Activated T-helper 1 cell treated with anti-CD3 and anti-CD28 coated beads, Interleukin-12 subunit alpha, Interleukin-12 subunit beta, Interleukin-2, Interleukin-4 antibody, amounts not matched to agents 30 ng/mL and 10 ng/mL and 1 ng/mL, durations not matched to agents 14 hours and 24 hours and 36 hours (primary cell): ENCODE measurements at regions of chr2 and their contacts with region 1.

Region 1: DNA sequence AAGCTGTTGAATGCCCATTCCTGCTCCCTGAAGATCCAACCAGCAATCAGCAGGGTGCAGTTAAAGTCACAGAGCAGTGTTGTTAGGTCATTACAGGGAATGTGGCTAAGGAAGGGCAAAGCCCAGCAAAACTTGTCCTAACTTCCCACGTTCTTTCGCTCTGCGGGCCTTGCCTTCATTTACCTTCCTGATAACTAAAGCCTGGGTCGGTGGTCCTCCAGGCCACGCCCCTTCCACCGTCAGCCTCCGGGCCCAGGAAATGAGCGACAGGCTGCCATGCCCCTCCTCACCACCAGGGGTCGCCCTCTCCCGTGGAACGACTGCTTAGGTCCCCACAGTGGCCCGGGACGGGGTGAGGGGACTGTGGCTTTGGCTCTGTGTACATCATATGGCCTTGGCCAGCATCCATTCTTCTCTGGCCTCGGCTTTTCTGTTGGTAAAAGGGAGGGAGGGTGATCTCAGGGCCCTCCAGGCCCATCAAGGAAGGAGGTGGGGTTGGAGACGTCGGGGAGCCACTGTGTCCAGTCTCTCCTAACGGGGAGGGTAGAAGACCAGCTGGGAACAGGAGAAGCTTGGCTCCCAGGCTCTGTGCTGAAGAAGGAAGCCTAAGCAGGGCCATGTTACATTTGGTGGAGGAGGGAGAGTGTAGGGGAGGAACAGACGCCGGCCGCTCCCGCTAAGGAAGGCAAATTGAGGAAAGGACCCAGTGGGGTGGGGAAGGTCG is 2.2 kb downstream of the SH2D6 start:
- DNase-seq: peak; percentile 86
- H3K4me3 Mint-ChIP-seq: peak overlapping the region; percentile 80
- H3K27ac Mint-ChIP-seq: peak overlapping the region; percentile 84
- H3K4me1 Mint-ChIP-seq: peaks cover 34% of the 10 kb centered on the region
- H3K27me3 Mint-ChIP-seq: no peaks in the 10 kb centered on the region

Region 2: GRCh38 chr2:85354286-85355072 is 66.2 kb before region 1 on chr2 and contains the starts of genes ELMOD3 and RETSAT:
- intact Hi-C with region 1: loop called (anchors 1 kb)
- DNase-seq: peak; percentile 97
- H3K4me3 Mint-ChIP-seq: peak within 1 kb of the TSS; percentile 100
- H3K27ac Mint-ChIP-seq: peak within 1 kb of the TSS; percentile 98
- H3K4me1 Mint-ChIP-seq: peaks cover 44% of the 10 kb centered on the region
- H3K27me3 Mint-ChIP-seq: no peaks in the 10 kb centered on the region
- total RNA-seq, gene ELMOD3: 13.8 and 15.9 TPM in 2 replicates
- total RNA-seq, gene RETSAT: 23.4 and 25.9 TPM in 2 replicates

Region 3: GRCh38 chr2:85437488-85438284 is 17.0 kb after region 1 on chr2:
- intact Hi-C with region 1: loop called (anchors 1 kb)
- DNase-seq: peak; percentile 66
- H3K4me3 Mint-ChIP-seq: peak overlapping the region; percentile 88
- H3K27ac Mint-ChIP-seq: peak overlapping the region; percentile 97
- H3K4me1 Mint-ChIP-seq: peaks cover 26% of the 10 kb centered on the region
- H3K27me3 Mint-ChIP-seq: peaks cover 1% of the 10 kb centered on the region

Region 4: GRCh38 chr2:85561317-85561979 is 140.8 kb after region 1 on chr2 and contains the start of gene GGCX:
- intact Hi-C with region 1: loop called (anchors 1 kb)
- DNase-seq: peak; percentile 88
- H3K4me3 Mint-ChIP-seq: peak within 1 kb of the TSS; percentile 94
- H3K27ac Mint-ChIP-seq: peak within 1 kb of the TSS; percentile 81
- H3K4me1 Mint-ChIP-seq: peaks cover 36% of the 10 kb centered on the region
- H3K27me3 Mint-ChIP-seq: no peaks in the 10 kb centered on the region
- total RNA-seq, gene GGCX: 26.2 and 28.3 TPM in 2 replicates

Region 5: DNA sequence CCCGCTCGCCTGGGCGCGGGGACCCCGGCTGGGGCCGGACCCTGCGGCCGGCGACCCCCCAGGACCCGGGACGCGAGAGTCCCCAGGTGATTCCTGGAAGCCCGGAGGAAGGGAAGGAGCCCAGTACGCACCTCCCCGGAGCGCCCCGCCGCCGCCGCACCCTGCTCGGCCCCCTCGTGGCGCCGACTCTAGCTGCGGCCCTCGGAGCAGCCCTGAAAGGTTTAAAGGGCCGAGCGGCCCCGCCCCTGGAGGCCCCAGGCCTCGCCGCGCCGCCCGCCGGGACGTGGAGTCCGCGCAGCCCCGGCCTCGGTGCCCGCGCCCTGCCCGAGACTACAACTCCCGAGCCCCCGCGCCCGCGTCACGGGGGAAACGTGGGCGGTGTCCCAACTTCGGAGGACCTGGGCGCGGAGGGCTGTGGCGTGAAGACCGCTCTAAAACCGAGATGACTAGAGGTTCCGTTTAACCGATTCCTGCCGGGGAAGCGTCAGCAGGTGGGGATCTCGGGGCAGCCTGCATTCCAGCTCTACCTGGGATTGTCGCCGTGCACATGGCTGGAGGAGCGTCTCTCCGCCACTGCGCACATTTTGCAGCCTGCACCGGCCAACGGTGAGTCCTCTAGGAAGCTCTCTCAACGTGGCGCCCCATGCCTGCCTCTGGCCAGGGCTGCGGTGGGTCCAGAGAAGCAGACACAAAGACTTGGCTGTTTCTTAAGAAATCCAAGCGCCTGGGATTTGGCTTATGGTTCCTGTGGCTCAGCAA is 182.0 kb after region 1 on chr2 and contains the start of gene TMEM150A:
- intact Hi-C with region 1: loop called (anchors 1 kb)
- DNase-seq: peak; percentile 80
- H3K4me3 Mint-ChIP-seq: peak within 1 kb of the TSS; percentile 87
- H3K27ac Mint-ChIP-seq: peak within 1 kb of the TSS; percentile 35
- H3K4me1 Mint-ChIP-seq: peaks cover 11% of the 10 kb centered on the region
- H3K27me3 Mint-ChIP-seq: no peaks in the 10 kb centered on the region
- total RNA-seq, gene TMEM150A: 7.0 and 8.9 TPM in 2 replicates

Region 6: GRCh38 chr2:86195055-86195807 is 774.5 kb after region 1 on chr2 and contains the start of gene IMMT:
- intact Hi-C with region 1: loop called (anchors 5 kb)
- DNase-seq: peak; percentile 93
- H3K4me3 Mint-ChIP-seq: peak within 1 kb of the TSS; percentile 99
- H3K27ac Mint-ChIP-seq: peak within 1 kb of the TSS; percentile 93
- H3K4me1 Mint-ChIP-seq: peaks cover 45% of the 10 kb centered on the region
- H3K27me3 Mint-ChIP-seq: no peaks in the 10 kb centered on the region
- total RNA-seq, gene IMMT: 164 and 166 TPM in 2 replicates